ENCODE measurements at regions of chr11 and their contacts with region 1.

Region 1: GRCh38 chr11:46238967-46239800 is 38.3 kb upstream of the CREB3L1 start:
- DNase-seq: peak; percentile 62 to 89 (median 78)
- ATAC-seq: peak; percentile 86
- H3K4me3 ChIP-seq: peak overlapping the region; percentile 55
- H3K4me3 Mint-ChIP-seq: peak overlapping the region in 9 of 10 donors; percentile 32 to 79 (median 74)
- H3K27ac ChIP-seq: no peak overlapping the region
- H3K27ac Mint-ChIP-seq: peak overlapping the region in 1 of 9 donors; percentile 43
- H3K4me1 ChIP-seq: peaks cover 12 to 20% of the 10 kb centered on the region in 2 donors
- H3K4me1 Mint-ChIP-seq: peaks cover 18 to 46% (median 31%) of the 10 kb centered on the region in 7 donors
- H3K27me3 ChIP-seq: peaks cover 0 to 4% of the 10 kb centered on the region in 2 donors
- H3K27me3 Mint-ChIP-seq: peaks cover 14 to 28% (median 19%) of the 10 kb centered on the region in 5 donors

Region 2: DNA sequence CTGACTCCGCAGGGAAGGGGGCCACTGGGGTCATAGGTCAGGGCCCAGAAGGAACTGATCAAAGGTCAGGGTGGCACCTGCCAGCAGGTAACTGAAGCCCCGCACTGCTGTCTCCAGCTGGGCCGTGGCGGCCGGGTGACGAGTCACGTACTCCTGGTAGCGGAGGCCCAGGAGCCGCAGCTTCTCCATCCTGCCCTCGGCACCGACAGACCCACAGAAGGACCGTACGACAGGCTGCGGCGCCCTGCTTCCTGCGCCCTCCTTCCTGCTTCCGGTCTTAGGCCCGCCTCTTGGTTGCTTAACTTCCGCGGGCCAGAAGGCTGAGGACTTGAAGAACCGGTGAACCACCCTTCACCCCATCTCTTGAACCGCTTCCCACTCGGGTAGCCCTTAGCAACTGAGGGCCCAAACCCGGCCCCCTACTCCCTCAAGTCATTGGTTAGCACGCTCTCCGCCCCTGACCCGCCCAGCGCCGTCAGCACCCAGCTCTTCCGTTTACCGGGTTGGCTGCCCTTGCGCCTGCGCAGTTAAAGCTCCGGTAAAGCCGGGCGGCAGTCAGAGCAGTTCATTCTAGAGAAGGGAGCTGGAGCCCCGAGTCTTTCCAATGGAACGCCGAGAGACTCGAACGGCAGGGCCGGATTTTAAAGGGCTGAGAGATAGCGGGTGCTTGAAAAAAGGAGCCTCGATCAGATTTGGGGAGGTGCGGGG is 321.4 kb before region 1 on chr11 and contains the start of gene PEX16:
- CTCF ChIA-PET with region 1: no interaction called
- POLR2A ChIA-PET with region 1: no interaction called
- intact Hi-C with region 1: loop called in 1 of 2 experiments (anchors 5 kb)
- DNase-seq: peak; percentile 86 to 98 (median 97)
- ATAC-seq: peak; percentile 95
- H3K4me3 ChIP-seq: peak within 1 kb of the TSS; percentile 72
- H3K4me3 Mint-ChIP-seq: peak within 1 kb of the TSS; percentile 86 to 98 (median 96)
- H3K27ac ChIP-seq: peak within 1 kb of the TSS; percentile 87
- H3K27ac Mint-ChIP-seq: peak within 1 kb of the TSS; percentile 91 to 100 (median 98)
- H3K4me1 ChIP-seq: peaks cover 24 to 36% of the 10 kb centered on the region in 2 donors
- H3K4me1 Mint-ChIP-seq: peaks cover 31 to 66% (median 49%) of the 10 kb centered on the region in 7 donors
- H3K27me3 ChIP-seq: no peaks in the 10 kb centered on the region
- H3K27me3 Mint-ChIP-seq: peaks cover 0 to 13% (median 4%) of the 10 kb centered on the region in 5 donors
- total RNA-seq, gene PEX16: 48.2 to 64.3 (median 58.1) TPM

Region 3: GRCh38 chr11:46295312-46296058 is 56.3 kb after region 1 on chr11:
- CTCF ChIA-PET with region 1: no interaction called
- POLR2A ChIA-PET with region 1: interaction called, 6 read pairs
- intact Hi-C with region 1: loop called in 1 of 2 experiments (anchors 1 kb)
- DNase-seq: peak; percentile 65 to 82 (median 80)
- ATAC-seq: peak; percentile 98
- H3K4me3 ChIP-seq: peak overlapping the region; percentile 78
- H3K4me3 Mint-ChIP-seq: peak overlapping the region; percentile 83 to 92 (median 86)
- H3K27ac ChIP-seq: peak overlapping the region; percentile 34
- H3K27ac Mint-ChIP-seq: peak overlapping the region in 3 of 9 donors; percentile 32 to 48 (median 38)
- H3K4me1 ChIP-seq: peaks cover 5 to 7% of the 10 kb centered on the region in 2 donors
- H3K4me1 Mint-ChIP-seq: peaks cover 0 to 15% (median 7%) of the 10 kb centered on the region in 7 donors
- H3K27me3 ChIP-seq: peaks cover 5 to 6% of the 10 kb centered on the region in 2 donors
- H3K27me3 Mint-ChIP-seq: peaks cover 0 to 35% (median 5%) of the 10 kb centered on the region in 5 donors

Region 4: GRCh38 chr11:46315033-46315738 is 76.0 kb after region 1 on chr11:
- CTCF ChIA-PET with region 1: interaction called, 49 read pairs
- POLR2A ChIA-PET with region 1: interaction called, 3 read pairs
- intact Hi-C with region 1: loop called (anchors 1 kb)
- DNase-seq: peak; percentile 42 to 76 (median 60)
- ATAC-seq: peak; percentile 88
- H3K4me3 ChIP-seq: no peak overlapping the region
- H3K4me3 Mint-ChIP-seq: peak overlapping the region in 2 of 10 donors; percentile 9 to 40
- H3K27ac ChIP-seq: no peak overlapping the region
- H3K27ac Mint-ChIP-seq: peak overlapping the region in 2 of 9 donors; percentile 2 to 63
- H3K4me1 ChIP-seq: peaks cover 6 to 16% of the 10 kb centered on the region in 2 donors
- H3K4me1 Mint-ChIP-seq: peaks cover 22 to 35% (median 24%) of the 10 kb centered on the region in 7 donors
- H3K27me3 ChIP-seq: no peaks in the 10 kb centered on the region
- H3K27me3 Mint-ChIP-seq: no peaks in the 10 kb centered on the region

Region 5: DNA sequence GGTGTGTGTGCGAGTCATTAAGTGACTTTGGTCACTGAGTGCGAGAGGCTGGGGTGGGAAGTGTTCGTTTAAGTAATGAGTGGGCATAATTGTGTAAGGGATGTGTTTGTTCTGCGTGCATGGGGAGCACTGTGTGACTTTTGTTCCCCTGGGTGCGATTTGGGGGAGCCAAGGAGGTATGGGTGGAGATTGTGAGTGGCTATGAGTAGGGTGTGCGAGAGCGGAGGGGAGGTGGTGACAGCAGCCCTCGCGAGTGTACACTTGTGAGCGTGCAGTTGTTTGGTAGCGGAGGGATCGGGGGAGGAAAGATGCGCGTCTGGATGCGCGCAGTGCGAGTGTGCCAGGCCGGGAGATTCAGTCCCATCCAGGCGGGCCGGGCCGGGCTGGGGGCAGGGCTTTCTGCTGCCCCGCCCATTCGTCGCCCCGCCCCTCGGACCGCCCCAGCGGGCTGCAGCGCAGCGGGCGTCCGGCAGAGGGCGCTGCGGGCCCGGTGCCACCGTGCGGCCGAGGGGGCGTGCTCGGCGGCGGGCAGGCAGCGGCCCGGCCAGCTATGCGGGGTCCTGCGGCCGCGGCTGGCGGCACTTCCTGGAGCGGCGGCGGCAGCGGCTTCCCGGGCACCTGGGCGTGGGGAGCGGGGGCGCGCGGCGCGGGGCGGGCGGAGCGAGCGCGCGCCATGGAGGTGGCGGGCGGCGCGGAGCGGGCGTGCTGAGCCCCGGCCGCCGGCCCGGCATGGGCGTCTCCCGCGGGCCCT is 107.9 kb after region 1 on chr11 and contains the start of gene DGKZ:
- CTCF ChIA-PET with region 1: interaction called, 29 read pairs
- POLR2A ChIA-PET with region 1: interaction called, 3 read pairs
- intact Hi-C with region 1: loop called (anchors 1 kb)
- DNase-seq: peak; percentile 85 to 100 (median 96)
- ATAC-seq: peak; percentile 92
- H3K4me3 ChIP-seq: peak within 1 kb of the TSS; percentile 91
- H3K4me3 Mint-ChIP-seq: peak within 1 kb of the TSS; percentile 93 to 97 (median 95)
- H3K27ac ChIP-seq: peak within 1 kb of the TSS; percentile 83
- H3K27ac Mint-ChIP-seq: peak within 1 kb of the TSS; percentile 89 to 98 (median 94)
- H3K4me1 ChIP-seq: peaks cover 46 to 79% of the 10 kb centered on the region in 2 donors
- H3K4me1 Mint-ChIP-seq: peaks cover 61 to 85% (median 75%) of the 10 kb centered on the region in 7 donors
- H3K27me3 ChIP-seq: no peaks in the 10 kb centered on the region
- H3K27me3 Mint-ChIP-seq: peaks cover 0 to 3% (median 0%) of the 10 kb centered on the region in 5 donors
- total RNA-seq, gene DGKZ: 146 to 291 (median 263) TPM

Region 6: GRCh38 chr11:46367244-46367915 is 128.2 kb after region 1 on chr11:
- CTCF ChIA-PET with region 1: interaction called, 6 read pairs
- POLR2A ChIA-PET with region 1: no interaction called
- intact Hi-C with region 1: loop called in 1 of 2 experiments (anchors 1 kb)
- DNase-seq: peak; percentile 65 to 84 (median 77)
- ATAC-seq: peak; percentile 86
- H3K4me3 ChIP-seq: no peak overlapping the region
- H3K4me3 Mint-ChIP-seq: peak overlapping the region in 5 of 10 donors; percentile 21 to 50 (median 45)
- H3K27ac ChIP-seq: peak overlapping the region; percentile 30
- H3K27ac Mint-ChIP-seq: peak overlapping the region in 5 of 9 donors; percentile 17 to 83 (median 63)
- H3K4me1 ChIP-seq: peaks cover 6 to 25% of the 10 kb centered on the region in 2 donors
- H3K4me1 Mint-ChIP-seq: peaks cover 20 to 52% (median 38%) of the 10 kb centered on the region in 7 donors
- H3K27me3 ChIP-seq: no peaks in the 10 kb centered on the region
- H3K27me3 Mint-ChIP-seq: no peaks in the 10 kb centered on the region

Region 7: GRCh38 chr11:46537537-46538295 is 298.5 kb after region 1 on chr11:
- CTCF ChIA-PET with region 1: interaction called, 3 read pairs
- POLR2A ChIA-PET with region 1: no interaction called
- intact Hi-C with region 1: loop called (anchors 1 kb)
- DNase-seq: peak in 8 of 9 donors; percentile 33 to 75 (median 66)
- ATAC-seq: peak; percentile 88
- H3K4me3 ChIP-seq: no peak overlapping the region
- H3K4me3 Mint-ChIP-seq: no peak overlapping the region
- H3K27ac ChIP-seq: no peak overlapping the region
- H3K27ac Mint-ChIP-seq: peak overlapping the region in 4 of 9 donors; percentile 2 to 38 (median 16)
- H3K4me1 ChIP-seq: peaks cover 0 to 3% of the 10 kb centered on the region in 2 donors
- H3K4me1 Mint-ChIP-seq: peaks cover 14 to 58% (median 39%) of the 10 kb centered on the region in 7 donors
- H3K27me3 ChIP-seq: no peaks in the 10 kb centered on the region
- H3K27me3 Mint-ChIP-seq: no peaks in the 10 kb centered on the region